PC-9 (cell line): ENCODE measurements at regions of chr5 and their contacts with region 1.

Region 1: GRCh38 chr5:95084757-95085156 is 200.1 kb downstream of the MCTP1 start:
- DNase-seq: no peak
- H3K4me3 ChIP-seq: no peak overlapping the region
- H3K27ac ChIP-seq: no peak overlapping the region
- H3K4me1 ChIP-seq: peaks cover 11% of the 10 kb centered on the region
- H3K27me3 ChIP-seq: no peaks in the 10 kb centered on the region
- CTCF ChIP-seq: no peak

Region 2: GRCh38 chr5:95152535-95152934 is 67.8 kb after region 1 on chr5:
- CTCF ChIA-PET with region 1: no interaction called
- POLR2A ChIA-PET with region 1: interaction called, 10 read pairs
- intact Hi-C with region 1: no loop called
- DNase-seq: no peak
- H3K4me3 ChIP-seq: no peak overlapping the region
- H3K27ac ChIP-seq: no peak overlapping the region
- H3K4me1 ChIP-seq: no peaks in the 10 kb centered on the region
- H3K27me3 ChIP-seq: no peaks in the 10 kb centered on the region
- CTCF ChIP-seq: no peak